CD8-positive, alpha-beta T cell (primary cell): ENCODE measurements at regions of chr3 and their contacts with region 1.

Region 1: DNA sequence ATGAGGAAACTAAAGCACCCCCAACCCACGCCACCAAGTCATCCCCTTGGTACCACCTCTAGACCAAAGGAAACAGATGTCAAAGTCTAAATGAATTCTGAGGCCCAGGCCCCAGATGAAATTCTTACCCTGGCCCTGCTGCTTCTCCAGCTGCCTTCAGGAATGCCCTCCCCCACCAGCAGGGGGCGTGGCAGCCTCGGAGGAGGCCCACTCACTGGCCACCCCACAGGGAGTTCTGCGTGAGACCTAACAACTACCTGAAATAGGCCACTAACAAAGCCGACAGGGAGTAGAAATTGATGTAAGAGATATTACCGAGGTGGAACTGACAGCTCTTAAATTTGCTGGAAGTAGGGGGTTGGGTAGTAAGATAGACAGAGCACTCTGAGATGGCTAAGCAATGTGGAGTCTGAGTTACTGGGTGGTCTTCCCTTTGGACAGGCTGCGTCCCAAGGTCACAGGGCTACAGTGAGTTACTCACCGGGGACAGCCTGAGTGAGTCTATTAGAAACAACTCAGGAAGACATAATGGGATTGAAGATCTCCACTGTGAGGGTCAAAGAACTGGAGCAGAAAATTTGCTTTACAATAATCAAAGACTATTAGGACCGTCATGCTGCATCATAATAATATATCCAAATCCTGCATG is 240.7 kb downstream of the SHOX2 start:
- DNase-seq: peak in 7 of 9 experiments; percentile 2 to 27 (median 11)
- ATAC-seq: no peak
- H3K4me3 ChIP-seq: no peak overlapping the region
- H3K4me3 Mint-ChIP-seq: no peak overlapping the region
- H3K27ac ChIP-seq: no peak overlapping the region
- H3K27ac Mint-ChIP-seq: no peak overlapping the region
- H3K4me1 ChIP-seq: no peaks in the 10 kb centered on the region
- H3K4me1 Mint-ChIP-seq: no peaks in the 10 kb centered on the region
- H3K27me3 ChIP-seq: no peaks in the 10 kb centered on the region
- H3K27me3 Mint-ChIP-seq: no peaks in the 10 kb centered on the region
- CTCF ChIP-seq: no peak

Region 2: GRCh38 chr3:158313338-158313927 is 448.0 kb after region 1 on chr3:
- CTCF ChIA-PET with region 1: no interaction called
- POLR2A ChIA-PET with region 1: no interaction called
- intact Hi-C with region 1: loop called in 1 of 2 experiments (anchors 10 kb)
- DNase-seq: peak in 2 of 9 experiments; percentile 15 to 25
- ATAC-seq: no peak
- H3K4me3 ChIP-seq: no peak overlapping the region
- H3K4me3 Mint-ChIP-seq: no peak overlapping the region
- H3K27ac ChIP-seq: no peak overlapping the region
- H3K27ac Mint-ChIP-seq: no peak overlapping the region
- H3K4me1 ChIP-seq: no peaks in the 10 kb centered on the region
- H3K4me1 Mint-ChIP-seq: no peaks in the 10 kb centered on the region
- H3K27me3 ChIP-seq: no peaks in the 10 kb centered on the region
- H3K27me3 Mint-ChIP-seq: no peaks in the 10 kb centered on the region
- CTCF ChIP-seq: no peak

Region 3: GRCh38 chr3:158434412-158435038 is 569.0 kb after region 1 on chr3:
- CTCF ChIA-PET with region 1: no interaction called
- POLR2A ChIA-PET with region 1: no interaction called
- intact Hi-C with region 1: loop called in 1 of 2 experiments (anchors 10 kb)
- DNase-seq: peak in 4 of 9 experiments; percentile 11 to 49 (median 28)
- ATAC-seq: no peak
- H3K4me3 ChIP-seq: no peak overlapping the region
- H3K4me3 Mint-ChIP-seq: no peak overlapping the region
- H3K27ac ChIP-seq: no peak overlapping the region
- H3K27ac Mint-ChIP-seq: no peak overlapping the region
- H3K4me1 ChIP-seq: no peaks in the 10 kb centered on the region
- H3K4me1 Mint-ChIP-seq: no peaks in the 10 kb centered on the region
- H3K27me3 ChIP-seq: no peaks in the 10 kb centered on the region
- H3K27me3 Mint-ChIP-seq: no peaks in the 10 kb centered on the region
- CTCF ChIP-seq: peak; percentile 59